ENCODE measurements at regions of chr14 and their contacts with region 1.

Region 1: GRCh38 chr14:74109369-74109768 is 24.6 kb downstream of the LIN52 start:
- DNase-seq: no peak

Region 2: GRCh38 chr14:74038015-74038859 is 71.1 kb before region 1 on chr14:
- intact Hi-C with region 1: no loop called
- DNase-seq: no peak

Region 3: DNA sequence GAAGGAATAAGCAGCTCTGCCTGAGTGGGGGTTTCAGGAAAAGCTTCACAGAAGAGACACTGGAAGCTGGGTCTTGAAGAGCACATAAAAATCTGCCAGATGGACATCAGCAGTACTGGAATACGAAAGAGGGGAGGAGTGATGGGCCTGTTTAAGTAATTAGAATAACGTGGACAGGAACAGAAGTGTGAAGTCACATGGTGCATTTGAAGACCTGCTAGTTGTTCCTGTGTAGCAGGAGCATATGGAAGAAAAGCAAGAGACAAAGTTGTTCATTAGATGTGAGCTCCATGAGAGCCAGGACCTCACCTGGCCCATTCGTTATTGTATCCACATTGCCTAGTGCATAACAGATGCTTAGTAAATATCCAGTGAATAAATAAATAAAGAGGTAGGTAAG is 60.5 kb after region 1 on chr14:
- intact Hi-C with region 1: no loop called
- DNase-seq: no peak

Region 4: DNA sequence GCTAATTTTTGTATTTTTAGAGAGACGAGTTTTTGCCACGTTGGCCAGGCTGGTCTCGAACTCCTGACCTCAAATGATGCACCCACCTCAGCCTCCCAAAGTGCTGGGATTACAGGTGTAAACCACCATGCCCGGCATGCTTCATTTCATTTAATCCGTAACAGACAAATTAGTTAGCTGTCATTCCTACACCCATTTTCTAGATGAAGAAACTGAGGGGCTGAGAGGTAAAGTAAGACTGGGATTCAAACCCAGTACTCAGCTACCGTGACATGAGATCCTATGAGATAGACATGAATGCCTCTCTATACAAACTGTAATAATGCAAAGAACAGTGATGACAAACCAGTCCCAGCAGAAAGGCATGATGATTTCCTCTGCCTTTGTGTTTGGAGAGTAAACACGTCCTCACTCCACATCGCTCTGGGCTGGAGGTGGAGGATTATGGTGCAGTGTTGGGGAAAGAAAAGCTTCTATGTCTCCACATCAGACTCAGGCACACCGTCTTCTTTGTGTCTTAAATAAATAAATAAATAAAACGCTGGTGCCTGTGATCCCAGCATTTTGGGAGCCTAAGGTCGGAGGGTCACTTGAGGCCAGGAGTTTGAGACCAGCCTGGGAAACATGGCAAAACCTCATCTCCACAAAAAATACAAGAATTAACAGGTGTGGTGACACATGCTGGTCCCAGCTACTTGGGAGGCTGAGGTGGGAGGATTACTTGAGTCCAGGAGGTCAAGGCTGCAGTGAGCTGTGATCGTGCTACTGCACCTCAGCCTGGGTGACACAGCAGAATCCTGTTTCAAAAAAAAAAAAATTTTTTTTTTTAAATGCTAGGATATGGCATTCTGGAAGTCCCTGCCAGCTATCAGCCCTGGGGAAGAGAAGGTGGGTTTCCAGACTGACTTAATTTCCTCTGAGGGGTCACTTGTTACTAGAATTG is 140.3 kb after region 1 on chr14:
- intact Hi-C with region 1: loop called in 1 of 2 experiments (anchors 5 kb)
- DNase-seq: no peak

Region 5: DNA sequence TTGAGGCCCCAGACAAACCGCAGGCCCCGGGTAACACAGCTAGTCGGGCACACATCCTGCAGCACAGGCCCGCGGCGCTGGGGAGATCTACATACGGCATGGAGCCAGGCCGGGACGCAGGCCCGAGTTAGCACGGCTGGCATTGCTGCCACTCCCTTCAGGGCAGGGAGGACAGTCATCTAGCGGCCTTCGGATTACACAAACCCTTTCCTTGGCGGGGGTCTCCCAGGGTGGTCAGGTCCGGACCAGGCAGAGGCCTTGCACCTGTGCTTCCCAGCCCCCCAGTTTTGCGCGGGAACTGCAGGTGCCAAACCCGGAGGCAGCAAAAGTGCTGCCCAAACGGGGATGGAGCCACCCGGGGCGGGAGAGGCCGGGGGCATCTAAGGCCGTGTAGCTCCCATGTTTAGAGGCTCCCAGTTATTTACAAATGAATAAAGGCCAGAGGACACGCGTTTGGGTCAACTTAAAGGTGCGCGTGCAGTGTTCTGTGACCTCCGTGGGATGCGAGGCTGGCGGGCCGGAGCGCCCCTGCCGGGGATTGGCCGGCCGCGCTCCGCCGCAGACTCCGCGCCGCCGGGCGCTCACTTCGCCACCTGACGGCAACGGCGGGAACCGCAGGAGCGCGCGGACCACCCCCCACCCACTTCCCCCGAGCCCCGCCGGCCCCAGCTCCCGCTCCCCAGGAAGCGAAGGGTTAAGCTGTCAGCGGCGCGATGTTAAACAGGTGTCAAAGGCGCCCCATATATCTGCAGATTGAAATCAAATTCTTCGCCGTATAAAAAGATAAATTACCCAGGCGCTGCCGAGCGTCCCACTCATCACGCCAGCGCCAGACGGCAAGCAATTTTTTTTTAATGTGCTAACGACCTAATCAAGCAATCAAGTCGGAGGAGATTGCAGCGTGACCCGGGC is 148.0 kb after region 1 on chr14:
- intact Hi-C with region 1: loop called (anchors 5 kb)
- DNase-seq: no peak

Region 6: DNA sequence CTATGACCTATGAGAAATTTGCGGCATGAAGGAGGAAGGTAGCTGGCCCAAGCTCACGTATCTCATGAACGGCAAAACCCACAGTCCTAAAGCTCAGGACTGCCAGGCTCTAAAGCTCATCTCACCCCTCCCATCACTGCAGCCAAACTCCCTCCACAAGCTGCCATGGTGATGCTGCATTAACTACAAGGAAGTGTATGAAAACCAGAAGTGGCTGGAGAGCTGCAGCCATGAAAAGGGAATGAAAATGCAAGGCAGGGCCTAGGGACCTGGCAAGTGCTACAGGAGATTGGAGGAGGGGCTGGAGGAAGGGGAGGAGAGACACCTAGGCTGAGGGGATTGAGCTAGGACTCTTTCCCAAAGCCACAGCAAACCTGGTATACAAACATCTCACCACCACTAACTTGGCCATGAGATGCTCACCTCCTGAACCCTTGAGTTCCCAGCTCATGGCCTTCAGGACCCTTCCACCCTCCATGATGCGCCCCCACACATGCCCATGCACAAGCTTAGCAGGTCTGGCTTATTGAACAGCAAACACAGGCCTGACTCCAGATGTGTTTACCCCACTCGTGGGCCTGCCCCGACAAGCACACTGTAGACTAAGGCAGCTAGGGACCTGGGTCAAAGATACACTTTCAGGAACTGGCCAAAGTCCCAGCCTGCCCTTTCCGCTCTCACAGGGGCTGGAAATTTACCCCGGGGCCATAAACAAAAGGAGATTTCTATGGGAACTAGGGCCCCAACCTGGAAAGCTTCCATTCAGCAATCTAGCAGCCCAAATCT is 460.6 kb after region 1 on chr14:
- intact Hi-C with region 1: no loop called
- DNase-seq: peak; percentile 78

Measured in posterior vena cava (tissue), 2 donors.